Activated T-helper 2 cell treated with anti-CD3 and anti-CD28 coated beads, Interferon-gamma antibody, Interleukin-2, Interleukin-4, amounts not matched to agents 10 μg/mL and 5 μg/mL and 100 μg/mL, durations not matched to agents 14 hours and 24 hours and 36 hours (primary cell): ENCODE measurements at regions of chr11 and their contacts with region 1.

Region 1: DNA sequence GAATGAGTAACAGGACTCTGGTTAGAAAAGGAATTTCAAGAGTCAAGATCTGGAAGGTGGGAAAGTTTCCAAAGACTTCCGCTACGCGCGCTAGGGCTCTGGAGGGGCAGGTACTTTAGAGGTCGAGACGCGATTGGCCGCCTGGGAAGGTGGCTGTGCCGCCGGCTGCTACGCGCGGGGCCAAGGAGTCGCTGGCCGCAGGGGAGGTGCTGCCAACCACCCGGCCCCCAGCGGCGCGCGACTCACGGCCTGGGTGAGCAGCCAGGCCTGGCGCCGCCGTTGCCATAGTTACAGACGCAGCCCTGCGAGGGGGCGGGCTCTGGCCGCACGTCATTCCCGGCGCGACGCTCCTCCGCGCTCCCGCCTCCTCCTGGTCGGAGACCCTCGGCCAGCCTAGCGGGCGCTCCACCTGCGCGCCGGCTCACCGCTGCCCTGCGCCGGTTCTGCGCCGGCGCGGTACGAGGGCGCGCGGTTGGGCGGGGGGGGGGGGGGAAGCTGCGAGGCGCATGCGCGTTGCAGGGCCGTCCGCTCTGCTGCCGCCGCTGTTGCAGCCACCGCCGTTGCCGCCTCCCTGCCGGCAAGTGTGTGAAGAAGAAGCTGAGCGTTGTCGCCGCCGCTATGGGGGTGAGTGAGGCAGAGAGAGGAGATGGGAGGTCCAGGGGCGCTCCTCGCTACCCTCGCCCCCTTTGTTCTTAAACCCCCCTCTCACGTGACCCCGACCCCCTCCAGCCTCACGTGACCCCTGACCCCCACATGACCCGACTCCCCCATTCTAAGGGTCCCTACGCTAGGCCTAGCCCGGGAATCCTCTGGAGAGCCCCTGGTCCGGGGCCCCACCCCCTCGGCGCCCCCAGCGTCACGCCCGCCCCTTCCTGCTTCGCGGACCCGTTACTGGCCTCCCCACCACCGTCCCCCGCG is at the start of gene NAA40:
- DNase-seq: peak; percentile 91
- H3K4me3 Mint-ChIP-seq: peak within 1 kb of the TSS; percentile 91
- H3K27ac Mint-ChIP-seq: peak within 1 kb of the TSS; percentile 72
- H3K4me1 Mint-ChIP-seq: peaks cover 14% of the 10 kb centered on the region
- H3K27me3 Mint-ChIP-seq: no peaks in the 10 kb centered on the region
- total RNA-seq, gene NAA40: 29.9 and 30.3 TPM in 2 replicates

Region 2: GRCh38 chr11:63951779-63952536 is 13.2 kb after region 1 on chr11:
- intact Hi-C with region 1: loop called (anchors 1 kb)
- DNase-seq: peak; percentile 39
- H3K4me3 Mint-ChIP-seq: peak overlapping the region; percentile 46
- H3K27ac Mint-ChIP-seq: peak overlapping the region; percentile 53
- H3K4me1 Mint-ChIP-seq: peaks cover 19% of the 10 kb centered on the region
- H3K27me3 Mint-ChIP-seq: no peaks in the 10 kb centered on the region

Region 3: DNA sequence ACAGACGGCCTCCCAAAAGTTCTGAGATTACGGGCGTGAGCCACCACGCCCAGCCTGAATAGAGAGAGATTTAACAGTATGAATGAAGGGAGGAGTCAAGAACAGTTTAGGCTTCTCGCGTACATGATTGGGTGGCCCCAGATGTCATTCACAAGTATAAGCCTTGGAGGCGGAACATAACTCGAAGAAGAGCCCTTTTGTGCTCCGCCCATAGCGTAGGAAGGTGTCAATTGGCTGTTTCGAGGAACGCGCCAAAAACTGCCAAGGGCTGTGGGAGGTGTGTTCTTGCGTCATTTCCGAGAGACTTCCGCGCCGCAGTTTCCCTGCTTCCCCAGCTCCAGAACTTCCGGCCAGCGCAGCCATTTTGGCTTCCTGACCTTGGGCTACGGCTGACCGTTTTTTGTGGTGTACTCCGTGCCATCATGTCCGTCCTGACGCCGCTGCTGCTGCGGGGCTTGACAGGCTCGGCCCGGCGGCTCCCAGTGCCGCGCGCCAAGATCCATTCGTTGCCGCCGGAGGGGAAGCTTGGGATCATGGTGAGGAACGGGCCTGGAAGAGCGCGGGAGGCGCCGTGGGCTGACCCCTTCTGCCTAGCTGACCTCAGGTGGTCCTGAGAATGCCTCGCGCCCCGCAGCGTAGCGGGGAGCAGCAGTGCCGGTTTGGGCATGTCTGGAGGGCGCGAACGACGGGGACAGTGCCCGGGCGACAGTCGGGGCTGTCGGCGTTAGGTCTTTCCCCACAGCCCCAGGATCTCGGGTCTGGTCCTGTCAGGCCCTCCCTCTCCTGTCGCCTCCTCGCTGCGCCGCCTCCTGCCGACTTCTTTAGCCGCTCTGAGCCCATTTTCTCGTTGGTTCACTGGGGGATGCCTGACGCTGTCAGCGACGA is 35.8 kb after region 1 on chr11 and contains the start of gene COX8A:
- intact Hi-C with region 1: loop called (anchors 2 kb)
- DNase-seq: peak; percentile 98
- H3K4me3 Mint-ChIP-seq: peak within 1 kb of the TSS; percentile 100
- H3K27ac Mint-ChIP-seq: peak within 1 kb of the TSS; percentile 98
- H3K4me1 Mint-ChIP-seq: peaks cover 21% of the 10 kb centered on the region
- H3K27me3 Mint-ChIP-seq: no peaks in the 10 kb centered on the region
- total RNA-seq, gene COX8A: 312 and 326 TPM in 2 replicates